Activated B cell treated with CpG ODN at 0.5 μM for 24 hours (primary cell): ENCODE measurements at regions of chr2 and their contacts with region 1.

Region 1: DNA sequence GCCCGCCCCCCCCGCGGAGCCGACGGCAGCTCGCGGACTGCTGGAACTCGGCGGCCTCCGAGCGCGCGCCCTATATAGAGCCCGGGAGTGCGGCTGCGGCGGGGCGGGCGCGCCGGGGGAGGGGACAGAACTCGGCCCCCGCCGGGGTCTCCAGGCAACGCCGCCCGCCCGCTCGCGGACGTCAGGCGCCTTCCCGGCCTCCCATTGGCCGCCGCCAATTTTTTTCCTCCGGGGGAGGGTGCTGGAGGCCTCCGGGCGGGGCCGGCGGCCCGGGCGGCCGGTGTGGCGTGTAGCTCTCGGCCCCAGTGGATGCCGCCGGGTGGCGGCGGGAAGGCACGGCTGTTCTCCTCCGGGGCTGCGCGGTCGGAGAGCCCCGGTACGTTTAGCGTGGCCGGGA is at the start of gene ZFP36L2:
- DNase-seq: peak; percentile 93
- ATAC-seq: peak; percentile 71
- H3K4me3 Mint-ChIP-seq: peak within 1 kb of the TSS; percentile 95
- H3K27ac Mint-ChIP-seq: peak within 1 kb of the TSS; percentile 95
- H3K4me1 Mint-ChIP-seq: peaks cover 56% of the 10 kb centered on the region
- H3K27me3 Mint-ChIP-seq: peaks cover 2% of the 10 kb centered on the region
- CTCF ChIP-seq: no peak
- total RNA-seq, gene ZFP36L2: 56.7 and 62.1 TPM in 2 replicates

Region 2: GRCh38 chr2:42859006-42859552 is 367.5 kb before region 1 on chr2:
- CTCF ChIA-PET with region 1: no interaction called
- POLR2A ChIA-PET with region 1: no interaction called
- intact Hi-C with region 1: loop called (anchors 2 kb)
- DNase-seq: no peak
- ATAC-seq: no peak
- H3K4me3 Mint-ChIP-seq: no peak overlapping the region
- H3K27ac Mint-ChIP-seq: no peak overlapping the region
- H3K4me1 Mint-ChIP-seq: no peaks in the 10 kb centered on the region
- H3K27me3 Mint-ChIP-seq: no peaks in the 10 kb centered on the region
- CTCF ChIP-seq: peak; percentile 42

Region 3: DNA sequence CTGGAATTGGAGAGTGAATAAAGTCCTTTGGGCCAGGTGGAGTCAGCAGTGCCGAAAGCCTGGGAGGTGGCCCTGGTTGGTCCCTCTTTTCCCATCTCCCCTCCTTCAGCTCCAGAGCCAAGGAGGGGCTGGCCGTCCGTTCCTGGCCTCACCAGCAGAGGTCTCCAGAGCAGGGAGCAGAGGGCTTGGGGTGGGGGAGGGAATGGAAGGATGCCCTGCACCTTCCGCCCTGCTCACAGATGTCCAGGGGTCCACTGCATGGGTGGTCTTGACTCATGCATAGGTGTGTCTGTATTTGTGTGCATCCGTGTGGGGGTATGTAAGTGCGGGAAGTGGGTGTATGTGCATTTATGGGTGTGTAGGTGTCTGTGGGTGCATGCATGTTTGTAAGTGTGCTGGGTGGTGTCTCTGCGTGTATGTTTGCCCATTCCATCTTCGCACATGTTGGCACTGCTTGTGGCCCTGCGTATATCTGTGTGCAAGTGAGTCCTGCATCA is 202.0 kb before region 1 on chr2:
- CTCF ChIA-PET with region 1: interaction called, 30 read pairs
- POLR2A ChIA-PET with region 1: interaction called, 6 read pairs
- intact Hi-C with region 1: no loop called
- DNase-seq: peak; percentile 25
- ATAC-seq: peak; percentile 74
- H3K4me3 Mint-ChIP-seq: no peak overlapping the region
- H3K27ac Mint-ChIP-seq: no peak overlapping the region
- H3K4me1 Mint-ChIP-seq: peaks cover 10% of the 10 kb centered on the region
- H3K27me3 Mint-ChIP-seq: peaks cover 2% of the 10 kb centered on the region
- CTCF ChIP-seq: no peak

Region 4: DNA sequence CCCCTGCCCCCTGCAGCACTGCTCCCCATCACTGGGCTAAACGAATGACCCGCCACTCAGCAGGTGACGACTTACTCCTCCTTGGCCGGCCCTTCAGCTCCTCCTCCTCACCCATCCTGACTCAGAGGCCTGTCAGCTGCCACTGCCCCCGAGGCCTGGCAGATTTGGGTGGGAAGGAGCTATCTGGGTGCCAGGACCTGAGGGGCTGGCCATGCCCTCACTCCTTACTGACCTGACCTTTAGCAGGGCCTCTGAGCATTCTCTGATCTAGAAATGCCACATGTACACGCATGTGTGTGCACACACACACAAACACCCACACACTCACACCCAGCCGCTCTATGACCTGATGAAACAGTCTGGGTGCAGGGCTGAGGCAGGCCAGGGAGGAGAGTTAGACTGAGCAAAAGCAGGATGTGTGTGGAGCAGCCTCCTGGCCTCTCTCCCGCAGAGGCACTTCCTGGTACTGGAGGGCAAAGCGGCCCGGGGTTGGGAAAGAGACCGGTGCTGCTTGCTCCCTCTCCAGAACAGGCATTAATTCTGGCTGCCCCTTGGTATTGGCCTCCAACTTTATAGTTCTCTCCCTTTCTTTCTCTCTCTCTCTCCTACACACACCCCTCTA is 68.2 kb before region 1 on chr2:
- CTCF ChIA-PET with region 1: interaction called, 3 read pairs
- POLR2A ChIA-PET with region 1: interaction called, 14 read pairs
- intact Hi-C with region 1: loop called (anchors 1 kb)
- DNase-seq: no peak
- ATAC-seq: peak; percentile 9
- H3K4me3 Mint-ChIP-seq: peak overlapping the region; percentile 71
- H3K27ac Mint-ChIP-seq: peak overlapping the region; percentile 96
- H3K4me1 Mint-ChIP-seq: peaks cover 47% of the 10 kb centered on the region
- H3K27me3 Mint-ChIP-seq: no peaks in the 10 kb centered on the region
- CTCF ChIP-seq: no peak

Region 5: DNA sequence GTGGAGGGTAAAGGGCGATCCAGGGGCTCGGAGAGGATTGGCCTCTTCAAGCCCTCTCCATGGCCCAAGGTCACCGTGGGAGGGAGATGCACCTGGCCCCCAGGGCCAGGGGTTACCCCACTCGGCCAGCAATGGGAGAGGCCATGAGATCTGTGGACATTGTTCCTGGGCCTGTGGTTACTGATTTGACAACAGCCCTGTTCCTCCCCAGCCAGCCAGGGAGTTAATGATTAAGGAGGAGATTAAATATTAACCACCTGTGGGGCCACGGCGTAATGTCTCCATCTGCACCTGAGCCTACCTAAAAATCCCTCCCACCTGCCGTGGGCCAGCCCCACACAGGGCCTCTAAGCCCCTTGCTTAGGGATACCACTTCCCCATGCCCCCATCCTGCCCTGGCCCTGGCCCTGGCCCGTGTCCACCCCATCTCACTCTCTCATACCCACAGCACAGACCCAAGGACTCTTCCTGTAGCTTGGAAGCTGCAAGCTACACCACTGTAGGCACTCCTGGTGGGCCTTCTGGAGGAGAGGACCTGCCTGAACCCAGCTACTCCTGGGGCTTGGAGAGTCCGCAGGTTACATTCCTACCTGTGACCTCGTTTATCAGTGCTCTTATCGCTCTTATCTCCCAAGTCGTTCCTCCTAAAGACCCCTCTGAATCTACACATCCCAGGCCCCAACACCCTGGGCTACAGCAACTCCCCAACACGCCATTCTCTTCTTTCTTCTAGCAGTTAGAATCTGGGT is 32.3 kb before region 1 on chr2:
- CTCF ChIA-PET with region 1: interaction called, 4 read pairs
- POLR2A ChIA-PET with region 1: interaction called, 13 read pairs
- intact Hi-C with region 1: no loop called
- DNase-seq: no peak
- ATAC-seq: peak; percentile 6
- H3K4me3 Mint-ChIP-seq: peak overlapping the region; percentile 35
- H3K27ac Mint-ChIP-seq: peak overlapping the region; percentile 79
- H3K4me1 Mint-ChIP-seq: peaks cover 44% of the 10 kb centered on the region
- H3K27me3 Mint-ChIP-seq: no peaks in the 10 kb centered on the region
- CTCF ChIP-seq: no peak

Region 6: GRCh38 chr2:43542285-43542937 is 315.9 kb after region 1 on chr2:
- CTCF ChIA-PET with region 1: interaction called, 3 read pairs
- POLR2A ChIA-PET with region 1: no interaction called
- intact Hi-C with region 1: loop called (anchors 2 kb)
- DNase-seq: no peak
- ATAC-seq: peak; percentile 40
- H3K4me3 Mint-ChIP-seq: no peak overlapping the region
- H3K27ac Mint-ChIP-seq: no peak overlapping the region
- H3K4me1 Mint-ChIP-seq: peaks cover 18% of the 10 kb centered on the region
- H3K27me3 Mint-ChIP-seq: no peaks in the 10 kb centered on the region
- CTCF ChIP-seq: no peak